ENCODE measurements at regions of chr13 and their contacts with region 1.

Region 1: GRCh38 chr13:99606324-99607066 is 105.2 kb downstream of the TM9SF2 start:
- DNase-seq: peak; percentile 54 to 91
- H3K4me3 ChIP-seq: peak within 1 kb of the TSS; percentile 61 to 96
- H3K27ac ChIP-seq: peak within 1 kb of the TSS; percentile 60 to 88
- H3K4me1 ChIP-seq: peaks cover 0 to 3% of the 10 kb centered on the region in 2 donors
- H3K27me3 ChIP-seq: no peaks in the 10 kb centered on the region
- CTCF ChIP-seq: peak in 1 of 3 experiments; percentile 1

Region 2: DNA sequence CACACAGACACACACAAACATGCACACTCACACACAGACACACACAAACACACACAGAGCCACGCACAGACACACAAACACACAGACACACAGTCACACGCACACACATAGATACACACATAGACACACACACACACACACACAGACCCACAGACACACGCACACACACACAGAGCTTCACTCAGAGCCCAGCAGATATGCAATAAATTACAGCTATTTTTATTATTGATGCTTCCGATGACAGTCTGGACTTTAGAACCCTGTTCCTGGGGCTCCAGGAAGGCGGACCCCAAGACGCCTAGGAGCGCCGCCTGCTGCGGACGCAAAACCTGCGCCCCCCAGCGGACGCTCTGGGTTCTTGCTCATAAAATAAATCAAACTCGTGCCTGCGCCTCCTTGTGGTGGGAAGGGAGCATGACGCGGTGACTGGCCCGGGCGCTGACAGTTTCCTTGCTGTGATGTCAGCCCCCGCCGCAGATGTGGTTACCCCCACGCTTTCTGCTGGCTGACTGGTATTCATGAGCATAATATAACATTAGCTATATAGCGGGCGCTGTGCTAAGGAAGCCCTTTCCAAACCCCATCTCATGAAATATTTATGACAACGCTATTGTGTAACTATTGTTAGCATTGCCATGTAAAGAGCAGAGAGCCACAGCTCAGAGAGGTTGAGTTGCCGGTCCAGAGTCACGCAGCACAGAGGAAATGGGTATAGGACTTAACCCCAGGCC is 169.6 kb before region 1 on chr13:
- intact Hi-C with region 1: no loop called
- DNase-seq: peak; percentile 33 to 93
- H3K4me3 ChIP-seq: no peak overlapping the region
- H3K27ac ChIP-seq: no peak overlapping the region
- H3K4me1 ChIP-seq: no peaks in the 10 kb centered on the region
- H3K27me3 ChIP-seq: no peaks in the 10 kb centered on the region
- CTCF ChIP-seq: peak; percentile 99 to 100 (median 99)

Region 3: DNA sequence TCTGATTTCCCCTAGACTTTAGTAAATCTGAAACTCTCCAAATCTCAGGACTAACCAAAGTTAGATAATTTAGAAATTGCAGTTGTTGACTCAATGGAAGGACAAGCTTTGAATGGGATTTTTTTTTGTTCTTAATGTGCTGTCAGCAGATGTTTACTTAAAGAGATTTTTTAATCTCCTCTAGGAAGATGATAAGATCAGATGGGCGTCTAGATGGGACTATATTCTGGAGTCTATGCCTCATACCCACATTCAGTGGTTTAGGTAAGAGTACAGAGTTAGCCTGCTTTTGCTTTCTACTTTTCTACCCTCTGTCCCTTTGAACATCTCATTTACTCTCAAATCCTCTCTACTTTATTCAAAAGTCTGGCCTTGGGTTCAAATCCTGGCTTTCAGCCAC is 66.0 kb before region 1 on chr13:
- intact Hi-C with region 1: no loop called
- DNase-seq: no peak
- H3K4me3 ChIP-seq: no peak overlapping the region
- H3K27ac ChIP-seq: no peak overlapping the region
- H3K4me1 ChIP-seq: no peaks in the 10 kb centered on the region
- H3K27me3 ChIP-seq: no peaks in the 10 kb centered on the region
- CTCF ChIP-seq: no peak

Region 4: DNA sequence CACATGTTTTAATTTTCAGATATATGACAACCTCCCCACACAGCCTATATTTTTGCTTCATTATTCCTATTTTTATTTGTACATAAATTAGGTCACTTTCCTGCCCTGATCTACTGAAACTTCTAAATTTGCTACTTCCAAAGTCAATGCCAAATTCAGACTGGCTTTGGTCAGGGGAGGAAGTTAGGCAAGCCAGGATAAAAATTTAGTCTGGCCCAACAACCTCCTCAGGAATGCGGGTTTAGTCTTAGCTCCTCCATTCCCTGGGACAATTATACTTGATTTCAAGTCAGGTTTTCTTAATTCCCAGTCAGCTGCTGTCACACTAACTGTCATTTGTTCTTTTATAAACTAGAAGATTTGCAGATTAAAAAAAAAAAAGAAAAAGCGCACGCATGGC is 20.9 kb before region 1 on chr13:
- intact Hi-C with region 1: loop called (anchors 2 kb)
- DNase-seq: no peak
- H3K4me3 ChIP-seq: no peak overlapping the region
- H3K27ac ChIP-seq: peak overlapping the region; percentile 20 to 50
- H3K4me1 ChIP-seq: peaks cover 4 to 14% of the 10 kb centered on the region in 2 donors
- H3K27me3 ChIP-seq: no peaks in the 10 kb centered on the region
- CTCF ChIP-seq: no peak

Region 5: GRCh38 chr13:99969919-99970621 is 363.6 kb after region 1 on chr13:
- intact Hi-C with region 1: loop called (anchors 10 kb)
- DNase-seq: no peak
- H3K4me3 ChIP-seq: peak overlapping the region; percentile 45 to 52
- H3K27ac ChIP-seq: no peak overlapping the region
- H3K4me1 ChIP-seq: peaks cover 18% of the 10 kb centered on the region in 2 donors
- H3K27me3 ChIP-seq: peaks cover 67% of the 10 kb centered on the region
- CTCF ChIP-seq: no peak

Region 6: GRCh38 chr13:100044936-100045335 is 438.4 kb after region 1 on chr13:
- intact Hi-C with region 1: no loop called
- DNase-seq: no peak
- H3K4me3 ChIP-seq: no peak overlapping the region
- H3K27ac ChIP-seq: no peak overlapping the region
- H3K4me1 ChIP-seq: no peaks in the 10 kb centered on the region
- H3K27me3 ChIP-seq: no peaks in the 10 kb centered on the region
- CTCF ChIP-seq: no peak

Measured in ascending aorta (tissue), 2 donors.